Calu3 (cell line): ENCODE measurements at regions of chr16 and their contacts with region 1.

Region 1: DNA sequence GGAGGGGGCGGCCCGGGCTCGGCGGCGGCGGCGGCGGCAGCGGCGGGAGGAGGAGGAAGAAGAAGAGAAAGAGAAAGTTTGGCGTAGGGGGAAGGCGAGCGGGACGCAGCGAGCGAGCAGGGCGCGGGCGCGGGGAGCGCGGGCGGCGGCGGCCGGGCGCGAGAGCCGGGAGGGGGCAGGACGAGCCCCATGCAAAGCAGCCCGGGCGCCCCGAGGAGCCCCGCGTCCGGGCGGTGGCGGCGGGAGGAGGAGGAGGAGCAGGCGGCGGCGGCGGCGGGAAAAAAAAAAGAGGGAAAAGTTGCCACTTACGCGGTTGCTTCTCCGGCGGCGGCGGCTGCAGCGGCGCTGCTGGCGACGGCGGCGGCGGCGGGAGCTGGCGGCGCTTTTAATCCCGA is 10.3 kb upstream of the ZFHX3 start:
- DNase-seq: peak; percentile 64
- H3K4me3 Mint-ChIP-seq: no peak overlapping the region
- H3K27ac Mint-ChIP-seq: no peak overlapping the region
- H3K4me1 Mint-ChIP-seq: peaks cover 20% of the 10 kb centered on the region
- H3K27me3 Mint-ChIP-seq: peaks cover 20% of the 10 kb centered on the region
- CTCF ChIP-seq: no peak

Region 2: DNA sequence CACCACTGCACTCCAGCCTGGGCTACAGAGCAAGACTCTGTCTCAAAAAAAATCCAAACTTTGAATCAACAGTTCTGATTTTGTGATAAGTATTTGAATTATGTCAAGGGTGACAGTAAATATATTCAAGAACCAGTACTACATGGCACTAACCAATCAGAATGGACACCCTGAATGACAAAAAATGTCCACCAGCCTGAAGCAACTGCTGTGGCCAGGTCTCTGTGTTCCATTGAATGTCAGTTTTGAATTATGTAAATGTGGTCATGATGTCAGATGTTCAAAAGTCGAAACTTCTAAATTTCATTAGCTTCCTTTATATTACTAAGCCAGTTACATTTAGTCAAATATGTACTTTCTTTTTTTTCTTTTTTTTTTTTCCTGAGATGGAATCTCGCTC is 1227.9 kb before region 1 on chr16:
- CTCF ChIA-PET with region 1: no interaction called
- intact Hi-C with region 1: no loop called
- DNase-seq: no peak
- H3K4me3 Mint-ChIP-seq: no peak overlapping the region
- H3K27ac Mint-ChIP-seq: no peak overlapping the region
- H3K4me1 Mint-ChIP-seq: peaks cover 14% of the 10 kb centered on the region
- H3K27me3 Mint-ChIP-seq: peaks cover 23% of the 10 kb centered on the region
- CTCF ChIP-seq: no peak

Region 3: GRCh38 chr16:72664509-72665225 is 393.6 kb before region 1 on chr16:
- CTCF ChIA-PET with region 1: no interaction called
- intact Hi-C with region 1: loop called (anchors 10 kb)
- DNase-seq: peak; percentile 97
- H3K4me3 Mint-ChIP-seq: peak overlapping the region; percentile 99
- H3K27ac Mint-ChIP-seq: peak overlapping the region; percentile 97
- H3K4me1 Mint-ChIP-seq: peaks cover 10% of the 10 kb centered on the region
- H3K27me3 Mint-ChIP-seq: no peaks in the 10 kb centered on the region
- CTCF ChIP-seq: no peak

Region 4: DNA sequence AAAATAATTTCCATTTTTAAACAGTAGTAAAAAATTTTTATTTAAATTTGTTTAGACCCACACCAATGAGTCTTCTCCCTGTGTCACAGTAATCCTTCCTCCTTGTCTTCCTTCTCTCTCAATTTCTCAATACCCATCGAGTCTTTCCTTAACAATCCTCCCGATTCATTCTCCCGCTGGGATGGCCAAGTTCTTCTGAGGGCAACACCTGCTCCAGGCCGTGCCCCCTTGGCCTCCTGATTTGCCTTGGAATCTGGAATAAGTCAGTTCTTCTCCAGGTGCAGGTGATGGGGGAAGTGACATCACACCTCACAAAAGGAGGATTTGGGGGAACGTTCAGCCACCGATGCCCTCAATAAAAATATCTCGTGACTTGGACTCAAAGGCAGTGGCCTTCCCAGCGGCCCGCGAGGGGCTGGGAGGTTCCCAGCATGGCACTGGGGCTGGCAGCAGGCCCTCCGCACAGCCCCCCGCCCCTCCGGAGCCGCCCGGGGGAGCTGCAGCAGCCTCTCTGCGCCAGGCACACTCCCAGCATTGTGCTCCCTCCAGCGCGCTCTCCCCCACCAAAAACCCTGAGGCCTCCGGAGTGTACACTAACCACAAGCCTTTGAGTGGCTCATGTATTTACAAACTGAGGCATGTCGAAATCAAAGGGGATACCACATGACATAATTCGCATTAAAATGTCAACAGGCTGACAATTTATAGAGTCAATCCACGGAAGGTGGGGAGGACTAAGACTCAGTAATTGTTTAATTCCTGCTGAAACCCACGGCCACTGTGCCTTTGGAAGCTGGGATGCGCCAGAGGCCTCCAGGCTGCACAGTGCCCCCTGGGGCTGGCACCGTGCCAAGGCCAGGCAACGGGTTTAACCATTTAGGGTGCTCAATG is 130.8 kb before region 1 on chr16:
- CTCF ChIA-PET with region 1: interaction called, 5 read pairs
- intact Hi-C with region 1: loop called (anchors 5 kb)
- DNase-seq: peak; percentile 83
- H3K4me3 Mint-ChIP-seq: peak overlapping the region; percentile 34
- H3K27ac Mint-ChIP-seq: peak overlapping the region; percentile 22
- H3K4me1 Mint-ChIP-seq: peaks cover 82% of the 10 kb centered on the region
- H3K27me3 Mint-ChIP-seq: no peaks in the 10 kb centered on the region
- CTCF ChIP-seq: no peak

Region 5: GRCh38 chr16:72995151-72995881 is 62.9 kb before region 1 on chr16:
- CTCF ChIA-PET with region 1: interaction called, 7 read pairs
- intact Hi-C with region 1: loop called (anchors 5 kb)
- DNase-seq: peak; percentile 18
- H3K4me3 Mint-ChIP-seq: no peak overlapping the region
- H3K27ac Mint-ChIP-seq: no peak overlapping the region
- H3K4me1 Mint-ChIP-seq: peaks cover 64% of the 10 kb centered on the region
- H3K27me3 Mint-ChIP-seq: no peaks in the 10 kb centered on the region
- CTCF ChIP-seq: peak; percentile 64

Region 6: DNA sequence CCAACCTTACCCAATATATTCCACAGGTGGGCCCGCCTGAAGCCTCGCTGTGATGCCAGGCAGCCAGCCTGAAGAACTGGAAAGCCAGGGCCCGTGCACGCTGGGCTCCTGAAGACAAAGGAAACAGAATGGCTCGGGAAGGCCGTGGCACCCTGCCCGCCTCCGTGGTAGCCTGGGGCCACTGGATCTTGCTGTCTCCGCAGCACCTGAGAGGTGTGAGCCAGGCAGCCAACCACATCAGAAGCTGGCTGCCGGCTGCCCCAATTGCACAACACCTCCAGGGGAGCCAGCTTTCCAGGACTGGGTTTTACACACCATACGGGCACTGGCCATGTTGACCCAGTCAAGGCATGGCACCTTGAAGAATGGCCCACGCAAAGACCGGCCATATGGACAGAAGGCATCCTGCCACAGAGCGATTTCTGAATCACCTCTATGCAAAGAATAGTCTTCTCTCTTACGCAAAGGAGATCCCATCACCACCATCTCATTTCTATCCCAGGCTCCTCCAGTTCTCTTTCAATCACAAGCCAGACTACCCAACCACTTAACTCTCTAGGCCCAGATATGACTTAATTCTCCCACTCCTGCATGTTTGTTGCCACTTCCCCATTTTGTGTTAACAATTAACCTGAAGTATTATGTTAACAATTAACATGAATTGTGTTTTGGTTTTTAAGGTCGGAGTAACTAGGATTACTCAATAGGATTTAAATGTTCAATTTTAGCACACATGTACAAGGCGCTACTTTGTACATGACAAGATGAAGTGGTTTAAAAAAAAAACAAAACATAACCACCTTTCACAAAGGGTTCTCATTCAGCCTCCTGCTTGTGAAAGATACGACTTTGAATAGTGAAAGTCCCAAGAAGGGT is 42.4 kb before region 1 on chr16:
- CTCF ChIA-PET with region 1: interaction called, 3 read pairs
- intact Hi-C with region 1: loop called (anchors 1 kb)
- DNase-seq: peak; percentile 82
- H3K4me3 Mint-ChIP-seq: peak overlapping the region; percentile 53
- H3K27ac Mint-ChIP-seq: peak overlapping the region; percentile 76
- H3K4me1 Mint-ChIP-seq: peaks cover 49% of the 10 kb centered on the region
- H3K27me3 Mint-ChIP-seq: no peaks in the 10 kb centered on the region
- CTCF ChIP-seq: no peak

Region 7: GRCh38 chr16:73068541-73069401 is 10.6 kb after region 1 on chr16:
- CTCF ChIA-PET with region 1: interaction called, 5 read pairs
- intact Hi-C with region 1: loop called (anchors 2 kb)
- DNase-seq: peak; percentile 66
- H3K4me3 Mint-ChIP-seq: peak overlapping the region; percentile 41
- H3K27ac Mint-ChIP-seq: peak overlapping the region; percentile 84
- H3K4me1 Mint-ChIP-seq: peaks cover 44% of the 10 kb centered on the region
- H3K27me3 Mint-ChIP-seq: peaks cover 30% of the 10 kb centered on the region
- CTCF ChIP-seq: no peak

Region 8: DNA sequence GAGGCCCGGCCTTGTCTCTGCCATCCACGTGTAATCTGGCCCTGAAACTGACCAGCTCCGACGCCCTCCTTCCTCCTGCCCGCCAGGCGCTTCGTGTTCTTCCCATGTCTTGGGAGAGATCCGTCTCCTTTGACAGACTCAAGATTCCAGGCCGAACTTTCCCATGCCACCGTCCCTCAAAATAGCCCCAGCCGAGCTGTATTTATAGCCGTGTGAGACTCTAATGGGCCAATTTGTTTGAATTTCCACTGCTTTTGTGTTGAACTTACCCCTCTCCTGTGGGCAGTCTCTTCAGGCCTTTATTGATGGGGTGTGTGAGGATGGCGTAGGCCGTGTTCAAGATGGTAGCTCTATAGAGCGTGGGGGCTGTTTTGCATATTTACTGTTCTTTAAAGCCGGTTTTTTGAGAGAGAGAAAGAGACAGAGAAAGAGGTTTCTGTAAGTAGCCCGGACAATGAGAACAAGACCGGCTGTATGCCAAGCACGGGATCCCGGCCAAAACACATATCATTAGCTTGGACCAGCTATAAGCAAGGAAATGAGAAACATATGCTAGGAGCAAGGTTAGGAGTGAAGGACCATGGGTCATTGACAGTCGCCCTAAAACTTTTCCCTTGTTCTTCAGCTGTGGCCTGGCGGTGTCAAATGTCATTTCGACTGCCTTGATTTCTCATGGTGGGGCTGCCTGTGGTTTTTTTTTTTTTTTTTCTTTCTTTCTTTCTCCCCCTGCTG is 114.2 kb after region 1 on chr16:
- CTCF ChIA-PET with region 1: no interaction called
- intact Hi-C with region 1: loop called (anchors 5 kb)
- DNase-seq: peak; percentile 46
- H3K4me3 Mint-ChIP-seq: no peak overlapping the region
- H3K27ac Mint-ChIP-seq: no peak overlapping the region
- H3K4me1 Mint-ChIP-seq: peaks cover 24% of the 10 kb centered on the region
- H3K27me3 Mint-ChIP-seq: peaks cover 60% of the 10 kb centered on the region
- CTCF ChIP-seq: peak; percentile 32